A673 (cell line): ENCODE measurements at regions of chr14 and their contacts with region 1.

Region 1: GRCh38 chr14:70027785-70028428 is 148.7 kb downstream of the SMOC1 start:
- DNase-seq: peak; percentile 65
- H3K4me3 ChIP-seq: no peak overlapping the region
- H3K27ac ChIP-seq: no peak overlapping the region
- H3K4me1 ChIP-seq: no peaks in the 10 kb centered on the region
- H3K27me3 ChIP-seq: peaks cover 12% of the 10 kb centered on the region
- CTCF ChIP-seq: peak; percentile 88

Region 2: GRCh38 chr14:69325646-69326265 is 702.2 kb before region 1 on chr14:
- CTCF ChIA-PET with region 1: no interaction called
- POLR2A ChIA-PET with region 1: no interaction called
- intact Hi-C with region 1: no loop called
- DNase-seq: no peak
- H3K4me3 ChIP-seq: no peak overlapping the region
- H3K27ac ChIP-seq: no peak overlapping the region
- H3K4me1 ChIP-seq: no peaks in the 10 kb centered on the region
- H3K27me3 ChIP-seq: no peaks in the 10 kb centered on the region
- CTCF ChIP-seq: no peak; the same call in 1 of the 2 replicates

Region 3: DNA sequence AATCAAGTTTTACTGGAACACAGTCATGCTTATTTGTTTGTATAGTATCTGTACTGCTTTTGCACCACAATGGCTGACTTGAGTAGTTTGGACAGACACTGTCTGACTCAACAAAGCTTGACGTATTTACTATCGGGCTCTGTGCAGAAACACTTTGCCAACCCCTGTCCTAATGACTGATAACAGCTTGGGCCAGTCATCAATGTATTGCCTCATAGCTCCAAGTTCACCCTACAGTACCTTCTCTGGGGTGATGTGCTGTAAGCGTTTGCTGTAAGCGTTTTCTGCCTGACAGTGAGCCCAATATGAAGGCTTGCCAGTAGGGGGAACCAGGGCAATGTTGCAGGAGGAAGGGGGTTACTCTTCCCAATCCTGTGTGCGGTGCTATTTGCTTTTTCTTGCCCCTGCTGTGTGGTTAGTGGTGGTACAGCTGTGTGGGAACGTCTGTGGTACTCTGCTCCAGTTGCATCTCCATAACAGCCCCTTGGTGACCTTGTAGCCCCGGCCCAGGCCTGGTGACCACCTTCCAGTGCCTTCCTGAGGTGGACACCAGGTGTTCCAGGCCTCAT is 447.8 kb before region 1 on chr14:
- CTCF ChIA-PET with region 1: no interaction called
- POLR2A ChIA-PET with region 1: no interaction called
- intact Hi-C with region 1: loop called (anchors 5 kb)
- DNase-seq: peak; percentile 74
- H3K4me3 ChIP-seq: no peak overlapping the region
- H3K27ac ChIP-seq: no peak overlapping the region
- H3K4me1 ChIP-seq: no peaks in the 10 kb centered on the region
- H3K27me3 ChIP-seq: peaks cover 34% of the 10 kb centered on the region
- CTCF ChIP-seq: peak; percentile 73

Region 4: GRCh38 chr14:69615496-69616407 is 412.2 kb before region 1 on chr14:
- CTCF ChIA-PET with region 1: no interaction called
- POLR2A ChIA-PET with region 1: no interaction called
- intact Hi-C with region 1: no loop called
- DNase-seq: peak; percentile 75
- H3K4me3 ChIP-seq: peak overlapping the region; percentile 28
- H3K27ac ChIP-seq: peak overlapping the region; percentile 73
- H3K4me1 ChIP-seq: peaks cover 24% of the 10 kb centered on the region
- H3K27me3 ChIP-seq: no peaks in the 10 kb centered on the region
- CTCF ChIP-seq: no peak

Region 5: GRCh38 chr14:69726761-69727511 is 301.0 kb before region 1 on chr14:
- CTCF ChIA-PET with region 1: interaction called, 17 read pairs
- POLR2A ChIA-PET with region 1: no interaction called
- intact Hi-C with region 1: no loop called
- DNase-seq: peak; percentile 85
- H3K4me3 ChIP-seq: peak overlapping the region; percentile 35
- H3K27ac ChIP-seq: no peak overlapping the region
- H3K4me1 ChIP-seq: peaks cover 3% of the 10 kb centered on the region
- H3K27me3 ChIP-seq: no peaks in the 10 kb centered on the region
- CTCF ChIP-seq: peak; percentile 96

Region 6: GRCh38 chr14:69818757-69819191 is 209.1 kb before region 1 on chr14:
- CTCF ChIA-PET with region 1: interaction called, 27 read pairs
- POLR2A ChIA-PET with region 1: interaction called, 3 read pairs
- intact Hi-C with region 1: loop called (anchors 1 kb)
- DNase-seq: peak; percentile 80
- H3K4me3 ChIP-seq: no peak overlapping the region
- H3K27ac ChIP-seq: no peak overlapping the region
- H3K4me1 ChIP-seq: no peaks in the 10 kb centered on the region
- H3K27me3 ChIP-seq: peaks cover 36% of the 10 kb centered on the region
- CTCF ChIP-seq: peak; percentile 88

Region 7: GRCh38 chr14:69879175-69880043 is 148.5 kb before region 1 on chr14 and contains the start of gene SMOC1:
- CTCF ChIA-PET with region 1: interaction called, 3 read pairs
- POLR2A ChIA-PET with region 1: no interaction called
- intact Hi-C with region 1: loop called (anchors 5 kb)
- DNase-seq: peak; percentile 64
- H3K4me3 ChIP-seq: peak within 1 kb of the TSS; percentile 35
- H3K27ac ChIP-seq: no peak within 1 kb of the TSS
- H3K4me1 ChIP-seq: peaks cover 5% of the 10 kb centered on the region
- H3K27me3 ChIP-seq: peaks cover 75% of the 10 kb centered on the region
- CTCF ChIP-seq: no peak
- total RNA-seq, gene SMOC1: not detected in 2 replicates

Region 8: DNA sequence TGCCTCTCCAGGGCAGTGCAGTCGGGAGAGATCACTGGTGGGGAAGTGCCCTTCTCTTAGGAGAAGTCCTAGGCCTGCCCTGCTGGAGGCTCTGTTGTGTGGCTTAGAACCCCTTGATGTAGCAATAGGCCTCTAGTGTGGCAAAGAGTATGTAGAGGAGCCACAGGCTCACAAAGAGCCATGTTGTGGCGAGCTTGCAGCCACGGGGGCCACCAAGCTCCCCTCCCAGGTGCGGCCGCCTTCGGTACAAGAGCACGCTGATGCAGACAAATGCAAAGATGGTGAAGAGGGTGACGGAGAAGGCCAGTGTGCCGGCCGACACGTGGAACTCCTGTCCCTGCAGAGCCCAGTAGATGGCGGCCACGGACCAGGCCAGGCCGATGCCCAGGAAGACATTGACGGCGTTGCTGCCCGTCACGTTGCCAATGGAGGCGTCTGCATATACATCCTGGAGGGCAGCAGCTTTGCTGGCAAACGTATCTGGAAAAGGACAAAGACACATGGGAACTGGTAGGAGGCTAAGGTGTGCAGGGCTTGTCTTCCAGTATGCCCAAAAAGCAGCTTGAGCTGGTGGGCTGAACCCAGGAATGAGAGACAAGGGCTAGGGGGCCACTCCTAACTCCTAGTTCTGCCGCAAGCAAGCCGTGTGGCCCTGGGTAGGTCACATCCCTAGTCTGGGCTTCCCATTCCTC is 18.1 kb after region 1 on chr14:
- CTCF ChIA-PET with region 1: no interaction called
- POLR2A ChIA-PET with region 1: no interaction called
- intact Hi-C with region 1: no loop called
- DNase-seq: peak; percentile 71
- H3K4me3 ChIP-seq: no peak overlapping the region
- H3K27ac ChIP-seq: no peak overlapping the region
- H3K4me1 ChIP-seq: no peaks in the 10 kb centered on the region
- H3K27me3 ChIP-seq: peaks cover 43% of the 10 kb centered on the region
- CTCF ChIP-seq: peak; percentile 77

Region 9: DNA sequence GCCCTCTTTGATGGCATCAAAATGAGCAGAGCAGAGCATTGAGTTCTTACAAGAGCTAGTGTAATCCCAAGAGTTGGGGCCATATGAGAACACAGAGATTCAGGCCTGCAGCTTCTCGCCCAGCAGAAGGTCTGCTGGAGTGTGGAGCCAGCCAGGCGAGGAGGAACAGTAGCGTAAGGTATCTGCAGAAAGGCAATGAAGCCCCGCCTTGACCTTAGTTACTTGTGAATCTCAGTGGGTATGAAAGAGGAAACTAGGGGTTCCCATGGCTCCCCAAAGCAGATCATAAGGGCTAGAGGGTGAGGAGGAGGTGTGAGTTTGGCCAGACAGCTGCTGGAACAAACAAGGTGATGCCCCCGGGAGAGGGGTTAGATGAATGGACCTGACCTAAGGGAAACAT is 111.5 kb after region 1 on chr14:
- CTCF ChIA-PET with region 1: no interaction called
- POLR2A ChIA-PET with region 1: no interaction called
- intact Hi-C with region 1: no loop called
- DNase-seq: no peak
- H3K4me3 ChIP-seq: no peak overlapping the region
- H3K27ac ChIP-seq: no peak overlapping the region
- H3K4me1 ChIP-seq: no peaks in the 10 kb centered on the region
- H3K27me3 ChIP-seq: peaks cover 53% of the 10 kb centered on the region
- CTCF ChIP-seq: no peak